MCF 10A (cell line): ENCODE measurements at regions of chr3 and their contacts with region 1.

Region 1: GRCh38 chr3:99579246-99579645 is 59.1 kb upstream of the COL8A1 start:
- DNase-seq: peak; percentile 40
- H3K4me3 Mint-ChIP-seq: no peak overlapping the region
- H3K27ac Mint-ChIP-seq: no peak overlapping the region
- H3K4me1 Mint-ChIP-seq: peaks cover 10% of the 10 kb centered on the region
- H3K27me3 Mint-ChIP-seq: no peaks in the 10 kb centered on the region
- CTCF ChIP-seq: no peak

Region 2: GRCh38 chr3:99442599-99442998 is 136.6 kb before region 1 on chr3:
- CTCF ChIA-PET with region 1: no interaction called
- POLR2A ChIA-PET with region 1: no interaction called
- intact Hi-C with region 1: no loop called
- DNase-seq: no peak
- H3K4me3 Mint-ChIP-seq: no peak overlapping the region
- H3K27ac Mint-ChIP-seq: no peak overlapping the region
- H3K4me1 Mint-ChIP-seq: no peaks in the 10 kb centered on the region
- H3K27me3 Mint-ChIP-seq: no peaks in the 10 kb centered on the region
- CTCF ChIP-seq: no peak

Region 3: GRCh38 chr3:99505646-99506269 is 73.5 kb before region 1 on chr3:
- CTCF ChIA-PET with region 1: no interaction called
- POLR2A ChIA-PET with region 1: no interaction called
- intact Hi-C with region 1: loop called (anchors 5 kb)
- DNase-seq: peak; percentile 93
- H3K4me3 Mint-ChIP-seq: no peak overlapping the region
- H3K27ac Mint-ChIP-seq: peak overlapping the region; percentile 47
- H3K4me1 Mint-ChIP-seq: peaks cover 28% of the 10 kb centered on the region
- H3K27me3 Mint-ChIP-seq: no peaks in the 10 kb centered on the region
- CTCF ChIP-seq: no peak